ENCODE measurements at regions of chr3 and their contacts with region 1.

Region 1: GRCh38 chr3:130480736-130481135 is 36.2 kb upstream of the COL6A6 start:
- DNase-seq: no peak
- CTCF ChIP-seq: peak; percentile 13

Region 2: GRCh38 chr3:130465521-130465920 is 15.2 kb before region 1 on chr3:
- CTCF ChIA-PET with region 1: interaction called, 10 read pairs
- POLR2A ChIA-PET with region 1: no interaction called
- DNase-seq: no peak
- CTCF ChIP-seq: no peak

Measured in GM10248 (cell line).